GM12878 (cell line): ENCODE measurements at regions of chr15 and their contacts with region 1.

Region 1: GRCh38 chr15:74407055-74407691 is 26.6 kb downstream of the SEMA7A start:
- DNase-seq: no peak
- ATAC-seq: no peak
- H3K4me3 ChIP-seq: no peak overlapping the region
- H3K27ac ChIP-seq: no peak overlapping the region
- H3K4me1 ChIP-seq: peaks cover 41% of the 10 kb centered on the region
- H3K27me3 ChIP-seq: no peaks in the 10 kb centered on the region
- CTCF ChIP-seq: no peak
- EP300 ChIP-seq: no peak
- POLR2A ChIP-seq: no peak
- RAD21 ChIP-seq: no peak

Region 2: GRCh38 chr15:74422650-74423430 is 15.7 kb after region 1 on chr15:
- CTCF ChIA-PET with region 1: interaction called, 187 read pairs
- POLR2A ChIA-PET with region 1: interaction called, 325 read pairs
- RAD21 ChIA-PET with region 1: interaction called, 496 read pairs
- SMC1A ChIA-PET with region 1: interaction called, 182 read pairs
- in situ Hi-C with region 1: no loop called
- intact Hi-C with region 1: loop called (anchors 2 kb)
- DNase-seq: no peak
- ATAC-seq: peak; percentile 44
- H3K4me3 ChIP-seq: peak overlapping the region; percentile 98
- H3K27ac ChIP-seq: peak overlapping the region; percentile 49
- H3K4me1 ChIP-seq: peaks cover 79% of the 10 kb centered on the region
- H3K27me3 ChIP-seq: no peaks in the 10 kb centered on the region
- CTCF ChIP-seq: no peak; a peak in 1 of 6 replicates
- EP300 ChIP-seq: no peak
- POLR2A ChIP-seq: peak; percentile 48
- RAD21 ChIP-seq: no peak

Region 3: GRCh38 chr15:74428442-74428787 is 21.2 kb after region 1 on chr15:
- CTCF ChIA-PET with region 1: interaction called, 187 read pairs
- POLR2A ChIA-PET with region 1: interaction called, 325 read pairs
- RAD21 ChIA-PET with region 1: interaction called, 496 read pairs
- SMC1A ChIA-PET with region 1: interaction called, 182 read pairs
- in situ Hi-C with region 1: no loop called
- intact Hi-C with region 1: loop called (anchors 1 kb)
- DNase-seq: no peak
- ATAC-seq: peak; percentile 55
- H3K4me3 ChIP-seq: peak overlapping the region; percentile 98
- H3K27ac ChIP-seq: peak overlapping the region; percentile 84
- H3K4me1 ChIP-seq: peaks cover 59% of the 10 kb centered on the region
- H3K27me3 ChIP-seq: no peaks in the 10 kb centered on the region
- CTCF ChIP-seq: no peak
- EP300 ChIP-seq: no peak
- POLR2A ChIP-seq: no peak; the same call in 1 of the 2 replicates
- RAD21 ChIP-seq: no peak

Region 4: DNA sequence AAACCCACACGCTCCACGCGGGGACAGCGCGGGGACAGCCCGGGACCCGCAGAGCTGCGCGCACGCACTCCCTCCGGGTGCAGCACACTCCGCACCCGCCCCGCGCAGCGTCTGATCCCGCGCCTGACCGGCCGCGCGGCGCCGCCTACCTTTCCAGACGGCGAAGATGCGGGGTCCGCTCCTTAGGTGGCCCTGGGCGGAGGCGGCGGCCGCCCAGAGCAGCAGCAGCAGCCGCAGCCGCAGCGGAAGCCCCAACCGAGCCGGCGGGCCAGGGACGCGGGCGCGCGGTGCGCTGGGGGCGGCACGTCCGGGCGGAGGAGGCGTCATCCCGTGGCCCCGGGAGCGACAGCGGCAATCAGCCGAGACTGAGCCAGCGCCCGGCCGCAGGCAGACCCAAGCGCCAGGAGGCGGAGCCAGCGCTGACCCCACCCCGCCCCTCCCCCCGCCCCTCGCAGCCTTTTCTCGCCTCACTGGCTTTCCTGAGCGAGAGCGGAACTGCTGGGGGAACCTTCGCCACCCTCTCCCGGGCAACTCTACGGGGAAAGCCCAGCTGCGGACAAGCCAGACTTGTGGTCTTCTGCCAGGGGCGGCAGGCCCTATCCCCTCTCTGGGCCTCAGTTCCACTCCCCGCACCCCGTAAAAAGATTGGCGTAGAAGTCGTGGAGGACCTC is 26.6 kb after region 1 on chr15 and contains the start of gene SEMA7A:
- CTCF ChIA-PET with region 1: interaction called, 187 read pairs
- POLR2A ChIA-PET with region 1: interaction called, 325 read pairs
- RAD21 ChIA-PET with region 1: interaction called, 496 read pairs
- SMC1A ChIA-PET with region 1: interaction called, 182 read pairs
- in situ Hi-C with region 1: no loop called
- intact Hi-C with region 1: loop called (anchors 1 kb)
- DNase-seq: peak; percentile 57
- ATAC-seq: peak; percentile 81
- H3K4me3 ChIP-seq: peak within 1 kb of the TSS; percentile 98
- H3K27ac ChIP-seq: peak within 1 kb of the TSS; percentile 87
- H3K4me1 ChIP-seq: peaks cover 32% of the 10 kb centered on the region
- H3K27me3 ChIP-seq: no peaks in the 10 kb centered on the region
- CTCF ChIP-seq: no peak
- EP300 ChIP-seq: peak in 1 of 2 experiments; percentile 25; a peak in 2 of 4 replicates
- POLR2A ChIP-seq: peak; percentile 98
- RAD21 ChIP-seq: no peak
- polyA plus RNA-seq, gene SEMA7A: 0.08 to 1.1 TPM

Region 5: GRCh38 chr15:74460871-74461846 is 54.0 kb after region 1 on chr15 and contains the start of gene UBL7:
- CTCF ChIA-PET with region 1: interaction called, 5 read pairs
- POLR2A ChIA-PET with region 1: interaction called, 17 read pairs
- RAD21 ChIA-PET with region 1: no interaction called
- SMC1A ChIA-PET with region 1: no interaction called
- in situ Hi-C with region 1: no loop called
- intact Hi-C with region 1: loop called (anchors 1 kb)
- DNase-seq: peak; percentile 77
- ATAC-seq: peak; percentile 92
- H3K4me3 ChIP-seq: peak within 1 kb of the TSS; percentile 92
- H3K27ac ChIP-seq: peak within 1 kb of the TSS; percentile 93
- H3K4me1 ChIP-seq: peaks cover 11% of the 10 kb centered on the region
- H3K27me3 ChIP-seq: no peaks in the 10 kb centered on the region
- CTCF ChIP-seq: peak in 2 of 3 experiments; percentile 7 to 48; a peak in 3 of 6 replicates
- EP300 ChIP-seq: no peak
- POLR2A ChIP-seq: peak; percentile 98
- RAD21 ChIP-seq: no peak
- polyA plus RNA-seq, gene UBL7: 25.9 to 59.1 TPM

Region 6: DNA sequence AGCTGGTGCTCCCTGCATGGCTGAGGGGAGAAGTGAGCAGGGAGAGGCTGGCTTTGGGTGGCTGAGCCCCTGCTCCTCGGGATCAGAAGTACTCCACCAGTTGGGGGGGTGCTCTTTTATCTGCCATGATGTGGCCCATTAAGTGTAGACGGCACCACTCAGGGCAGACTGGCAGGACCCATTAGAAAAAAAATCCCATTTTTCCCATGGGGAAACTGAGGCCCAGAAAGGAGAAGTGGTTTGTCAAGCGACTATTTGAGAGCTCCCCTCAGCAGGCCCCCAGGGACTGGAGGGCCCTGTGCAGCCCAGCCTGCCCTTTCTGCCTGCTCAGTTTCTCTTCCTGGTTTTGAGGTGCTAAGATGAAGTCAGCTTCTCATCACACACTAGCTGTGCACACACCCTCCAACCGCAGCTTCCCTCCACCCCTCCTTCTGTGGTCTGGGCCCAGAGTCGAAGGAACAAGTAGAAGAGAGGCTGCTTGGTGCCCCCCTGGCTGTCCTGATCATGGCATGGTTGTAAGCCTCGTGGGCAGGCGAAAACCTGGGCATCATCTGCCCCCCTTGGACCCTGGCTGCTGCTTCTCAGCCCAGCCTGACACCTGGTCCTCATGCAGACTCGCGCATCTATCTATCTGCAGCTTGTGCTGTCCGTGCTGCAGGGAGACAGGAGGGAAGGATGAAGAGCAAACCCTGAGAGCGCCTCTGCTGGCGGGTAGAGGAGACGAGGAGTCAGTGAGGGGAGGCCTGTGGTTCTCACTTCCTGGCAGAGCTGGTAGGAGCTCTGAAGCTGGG is 380.3 kb after region 1 on chr15:
- CTCF ChIA-PET with region 1: interaction called, 4 read pairs
- POLR2A ChIA-PET with region 1: interaction called, 8 read pairs
- RAD21 ChIA-PET with region 1: interaction called, 15 read pairs
- SMC1A ChIA-PET with region 1: interaction called, 9 read pairs
- in situ Hi-C with region 1: no loop called
- intact Hi-C with region 1: no loop called
- DNase-seq: peak; percentile 97
- ATAC-seq: peak; percentile 58
- H3K4me3 ChIP-seq: peak overlapping the region; percentile 94
- H3K27ac ChIP-seq: peak overlapping the region; percentile 96
- H3K4me1 ChIP-seq: peaks cover 55% of the 10 kb centered on the region
- H3K27me3 ChIP-seq: no peaks in the 10 kb centered on the region
- CTCF ChIP-seq: peak; percentile 79 to 93 (median 82)
- EP300 ChIP-seq: peak; percentile 83 to 88
- POLR2A ChIP-seq: peak; percentile 76
- RAD21 ChIP-seq: peak; percentile 45; the same call in 1 of the 2 replicates

Region 7: DNA sequence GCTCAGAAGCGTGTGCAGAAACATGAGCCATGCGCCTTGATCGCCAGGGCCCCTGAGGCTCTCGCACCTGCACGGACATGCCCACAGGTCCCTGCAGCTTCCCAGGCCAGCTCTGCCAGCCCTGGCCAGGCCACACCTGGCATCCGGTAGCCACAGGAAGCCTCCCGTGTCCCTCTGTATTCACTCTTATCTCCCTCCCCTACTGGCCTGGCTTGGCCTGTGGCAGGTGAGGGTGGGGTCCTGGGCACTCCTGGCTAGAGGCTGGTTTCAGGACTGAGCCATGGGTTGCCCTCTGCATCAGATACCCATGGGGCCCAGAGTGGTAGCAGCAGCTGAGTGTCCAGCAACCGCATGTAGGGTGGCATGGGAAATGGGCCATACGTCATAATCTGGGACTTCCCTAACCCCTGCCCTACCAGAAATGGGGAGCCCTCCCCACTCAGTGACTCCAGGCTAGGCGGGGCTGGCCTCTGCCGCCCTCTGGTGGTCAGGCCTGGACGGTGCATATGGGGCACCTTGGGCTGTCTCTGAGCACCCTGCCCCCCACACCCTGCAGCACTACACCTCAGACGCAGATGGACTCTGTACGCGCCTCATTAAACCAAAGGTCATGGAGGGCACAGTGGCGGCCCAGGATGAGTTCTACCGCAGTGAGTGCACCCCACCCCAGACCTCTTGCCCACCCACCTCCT is 392.8 kb after region 1 on chr15:
- CTCF ChIA-PET with region 1: no interaction called
- POLR2A ChIA-PET with region 1: no interaction called
- RAD21 ChIA-PET with region 1: no interaction called
- SMC1A ChIA-PET with region 1: no interaction called
- in situ Hi-C with region 1: no loop called
- intact Hi-C with region 1: no loop called
- DNase-seq: peak; percentile 76
- ATAC-seq: peak; percentile 94
- H3K4me3 ChIP-seq: no peak overlapping the region
- H3K27ac ChIP-seq: peak overlapping the region; percentile 39
- H3K4me1 ChIP-seq: peaks cover 38% of the 10 kb centered on the region
- H3K27me3 ChIP-seq: no peaks in the 10 kb centered on the region
- CTCF ChIP-seq: peak; percentile 97 to 99 (median 99); a peak in 5 of 6 replicates
- EP300 ChIP-seq: 0 out of 4 replicates have a peak, but pooled peaks of 1 of the 2 experiments have one; percentile 60
- POLR2A ChIP-seq: peak; percentile 69
- RAD21 ChIP-seq: peak; percentile 93